ENCODE measurements at regions of chr19 and their contacts with region 1.

Region 1: GRCh38 chr19:51338563-51339312 is 3.2 kb downstream of the VSIG10L start:
- DNase-seq: peak; percentile 90
- H3K4me3 ChIP-seq: peak overlapping the region; percentile 24 to 77 (median 50)
- H3K27ac ChIP-seq: peak overlapping the region; percentile 80 to 93 (median 84)
- H3K4me1 ChIP-seq: peaks cover 0 to 18% (median 12%) of the 10 kb centered on the region in 4 donors
- H3K27me3 ChIP-seq: no peaks in the 10 kb centered on the region
- CTCF ChIP-seq: peak; percentile 90 to 96 (median 92)
- EP300 ChIP-seq: no peak
- POLR2A ChIP-seq: no peak

Region 2: DNA sequence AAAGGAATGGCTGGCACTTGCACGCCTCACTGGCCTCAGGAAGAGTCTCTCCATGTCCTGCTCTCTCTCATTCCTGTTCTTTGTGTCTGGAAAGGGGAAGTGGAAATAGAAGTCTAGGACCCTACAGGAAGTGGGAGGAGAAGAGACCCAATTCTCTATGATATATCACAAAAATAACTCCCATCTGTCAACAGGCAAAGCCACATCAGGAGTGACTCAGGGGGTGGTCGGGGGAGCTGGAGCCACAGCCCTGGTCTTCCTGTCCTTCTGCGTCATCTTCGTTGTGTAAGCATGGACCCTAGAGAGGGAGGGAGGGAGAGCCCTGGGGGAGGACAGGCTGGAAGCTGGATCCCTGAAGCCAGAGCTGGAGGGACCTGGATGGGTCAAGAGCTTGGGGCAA is 211.0 kb before region 1 on chr19:
- in situ Hi-C with region 1: no loop called
- intact Hi-C with region 1: no loop called
- DNase-seq: peak; percentile 28
- H3K4me3 ChIP-seq: no peak overlapping the region
- H3K27ac ChIP-seq: peak overlapping the region in 3 of 4 donors; percentile 28 to 33 (median 32)
- H3K4me1 ChIP-seq: peaks cover 0 to 11% (median 5%) of the 10 kb centered on the region in 4 donors
- H3K27me3 ChIP-seq: peaks cover 5% of the 10 kb centered on the region
- CTCF ChIP-seq: no peak
- EP300 ChIP-seq: no peak
- POLR2A ChIP-seq: peak; percentile 46

Region 3: GRCh38 chr19:51194527-51195317 is 144.0 kb before region 1 on chr19:
- in situ Hi-C with region 1: no loop called
- intact Hi-C with region 1: no loop called
- DNase-seq: no peak
- H3K4me3 ChIP-seq: no peak overlapping the region
- H3K27ac ChIP-seq: no peak overlapping the region
- H3K4me1 ChIP-seq: no peaks in the 10 kb centered on the region
- H3K27me3 ChIP-seq: no peaks in the 10 kb centered on the region
- CTCF ChIP-seq: no peak
- EP300 ChIP-seq: no peak
- POLR2A ChIP-seq: no peak

Region 4: GRCh38 chr19:51422053-51422448 is 83.3 kb after region 1 on chr19:
- in situ Hi-C with region 1: loop called in 2 of 4 experiments (anchors 10 to 25 kb)
- intact Hi-C with region 1: loop called (anchors 10 kb)
- DNase-seq: peak; percentile 88
- H3K4me3 ChIP-seq: no peak overlapping the region
- H3K27ac ChIP-seq: no peak overlapping the region
- H3K4me1 ChIP-seq: no peaks in the 10 kb centered on the region
- H3K27me3 ChIP-seq: peaks cover 18% of the 10 kb centered on the region
- CTCF ChIP-seq: peak; percentile 92 to 99 (median 95)
- EP300 ChIP-seq: no peak
- POLR2A ChIP-seq: no peak

Region 5: GRCh38 chr19:51441410-51442390 is 103.0 kb after region 1 on chr19:
- in situ Hi-C with region 1: loop called in 1 of 4 experiments (anchors 25 kb)
- intact Hi-C with region 1: loop called (anchors 5 kb)
- DNase-seq: peak; percentile 73
- H3K4me3 ChIP-seq: peak overlapping the region in 1 of 4 donors; percentile 8
- H3K27ac ChIP-seq: peak overlapping the region in 3 of 4 donors; percentile 25 to 50 (median 40)
- H3K4me1 ChIP-seq: peaks cover 0 to 4% (median 0%) of the 10 kb centered on the region in 4 donors
- H3K27me3 ChIP-seq: peaks cover 28% of the 10 kb centered on the region
- CTCF ChIP-seq: no peak
- EP300 ChIP-seq: no peak
- POLR2A ChIP-seq: no peak